ENCODE measurements at regions of chr17 and their contacts with region 1.

Region 1: GRCh38 chr17:2707721-2708584 is 3.6 kb downstream of the CLUH start:
- DNase-seq: peak; percentile 84 to 94 (median 86)
- ATAC-seq: peak; percentile 41 to 73 (median 56)
- H3K4me3 ChIP-seq: peak overlapping the region; percentile 1 to 98 (median 56)
- H3K27ac ChIP-seq: peak overlapping the region; percentile 81 to 100 (median 89)
- H3K4me1 ChIP-seq: peaks cover 10 to 81% (median 51%) of the 10 kb centered on the region in 12 donors
- H3K27me3 ChIP-seq: no peaks in the 10 kb centered on the region
- CTCF ChIP-seq: peak; percentile 29 to 71 (median 52)
- POLR2A ChIP-seq: peak in 1 of 2 donors; percentile 22

Region 2: DNA sequence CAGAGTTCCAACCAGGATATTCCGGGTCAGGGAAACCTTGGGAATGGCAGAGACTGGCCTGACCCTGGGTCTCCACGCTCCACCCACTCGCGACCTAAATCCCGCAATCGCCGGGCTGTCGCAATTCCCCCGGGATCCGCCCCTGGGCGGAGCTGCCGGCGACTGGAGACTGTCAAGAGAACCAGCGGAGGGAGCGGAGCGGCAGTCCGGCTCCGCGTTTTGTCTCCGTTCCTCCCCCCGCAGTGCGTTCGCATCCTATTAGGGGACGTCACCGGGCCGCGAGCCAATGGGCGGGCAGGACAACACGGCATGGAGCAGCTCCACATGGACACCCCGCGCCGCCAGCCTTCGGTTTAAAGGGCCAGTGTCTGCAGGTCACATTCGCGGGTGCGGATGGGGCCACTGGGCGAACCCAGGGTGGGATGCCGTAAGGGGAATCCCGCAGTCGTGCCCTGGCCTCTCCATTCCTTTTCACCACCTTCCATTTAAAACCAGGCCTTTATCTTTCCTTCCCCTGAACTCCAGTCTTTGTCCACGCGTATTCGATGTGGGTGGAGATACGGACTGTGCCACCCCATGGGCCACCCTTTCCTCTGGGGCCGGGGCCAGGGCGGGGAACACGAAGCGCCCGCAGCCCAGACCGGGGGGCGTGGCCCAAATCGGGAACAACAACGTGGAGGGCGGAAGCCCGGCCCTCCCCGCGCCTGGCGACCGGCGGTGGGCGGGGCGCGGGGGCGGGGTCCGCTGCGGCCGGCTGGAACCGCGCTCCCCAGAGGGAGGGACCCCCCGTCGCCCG is 306.3 kb before region 1 on chr17:
- intact Hi-C with region 1: loop called in 1 of 10 experiments (anchors 10 kb)
- DNase-seq: peak; percentile 100
- ATAC-seq: peak; percentile 60 to 79 (median 70)
- H3K4me3 ChIP-seq: peak overlapping the region; percentile 71 to 99 (median 92)
- H3K27ac ChIP-seq: peak overlapping the region; percentile 94 to 100 (median 99)
- H3K4me1 ChIP-seq: peaks cover 13 to 75% (median 60%) of the 10 kb centered on the region in 12 donors
- H3K27me3 ChIP-seq: no peaks in the 10 kb centered on the region
- CTCF ChIP-seq: no peak
- POLR2A ChIP-seq: no peak

Measured in heart left ventricle (tissue), 16 donors.